ENCODE measurements at regions of chr20 and their contacts with region 1.

Region 1: GRCh38 chr20:31452575-31452974 is 12.1 kb downstream of the DEFB123 start:
- DNase-seq: no peak
- H3K4me3 Mint-ChIP-seq: no peak overlapping the region
- H3K27ac Mint-ChIP-seq: no peak overlapping the region
- H3K4me1 Mint-ChIP-seq: no peaks in the 10 kb centered on the region
- H3K27me3 Mint-ChIP-seq: peaks cover 10% of the 10 kb centered on the region
- CTCF ChIP-seq: no peak

Region 2: GRCh38 chr20:31368301-31368700 is 84.3 kb before region 1 on chr20 and contains the start of gene DEFB118:
- CTCF ChIA-PET with region 1: no interaction called
- POLR2A ChIA-PET with region 1: no interaction called
- intact Hi-C with region 1: no loop called
- DNase-seq: no peak
- H3K4me3 Mint-ChIP-seq: no peak within 1 kb of the TSS
- H3K27ac Mint-ChIP-seq: no peak within 1 kb of the TSS
- H3K4me1 Mint-ChIP-seq: no peaks in the 10 kb centered on the region
- H3K27me3 Mint-ChIP-seq: peaks cover 33% of the 10 kb centered on the region
- CTCF ChIP-seq: no peak
- total RNA-seq, gene DEFB118: not detected in 2 replicates

Region 3: DNA sequence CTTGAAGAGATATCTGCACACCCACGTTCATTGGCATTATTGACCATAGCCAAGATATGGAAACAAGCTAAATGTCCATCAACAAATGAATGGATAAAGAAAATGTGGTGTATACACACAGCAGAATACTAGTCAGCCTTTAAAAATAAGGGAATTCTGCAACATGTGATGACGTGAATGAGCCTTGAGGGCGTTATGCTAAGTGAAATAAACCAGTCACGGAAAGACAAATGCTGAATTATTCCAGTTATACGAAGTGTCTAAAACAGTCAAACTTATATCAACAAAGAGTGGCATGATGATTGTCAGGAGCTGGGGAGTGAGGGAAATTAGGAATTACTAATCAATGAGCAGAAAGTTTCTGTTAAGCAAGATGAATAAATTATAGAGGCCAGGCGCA is 38.2 kb before region 1 on chr20:
- CTCF ChIA-PET with region 1: interaction called, 15 read pairs
- POLR2A ChIA-PET with region 1: no interaction called
- intact Hi-C with region 1: no loop called
- DNase-seq: no peak
- H3K4me3 Mint-ChIP-seq: no peak overlapping the region
- H3K27ac Mint-ChIP-seq: no peak overlapping the region
- H3K4me1 Mint-ChIP-seq: no peaks in the 10 kb centered on the region
- H3K27me3 Mint-ChIP-seq: peaks cover 40% of the 10 kb centered on the region
- CTCF ChIP-seq: no peak

Region 4: GRCh38 chr20:31440012-31441002 is 12.3 kb before region 1 on chr20 and contains the start of gene DEFB123:
- CTCF ChIA-PET with region 1: interaction called, 43 read pairs
- POLR2A ChIA-PET with region 1: no interaction called
- intact Hi-C with region 1: no loop called
- DNase-seq: no peak
- H3K4me3 Mint-ChIP-seq: no peak within 1 kb of the TSS
- H3K27ac Mint-ChIP-seq: no peak within 1 kb of the TSS
- H3K4me1 Mint-ChIP-seq: no peaks in the 10 kb centered on the region
- H3K27me3 Mint-ChIP-seq: peaks cover 35% of the 10 kb centered on the region
- CTCF ChIP-seq: peak; percentile 22
- total RNA-seq, gene DEFB123: not detected in 2 replicates

Region 5: GRCh38 chr20:31508517-31509244 is 56.1 kb after region 1 on chr20:
- CTCF ChIA-PET with region 1: interaction called, 21 read pairs
- POLR2A ChIA-PET with region 1: no interaction called
- intact Hi-C with region 1: no loop called
- DNase-seq: no peak
- H3K4me3 Mint-ChIP-seq: no peak overlapping the region
- H3K27ac Mint-ChIP-seq: no peak overlapping the region
- H3K4me1 Mint-ChIP-seq: no peaks in the 10 kb centered on the region
- H3K27me3 Mint-ChIP-seq: peaks cover 11% of the 10 kb centered on the region
- CTCF ChIP-seq: no peak

Region 6: GRCh38 chr20:32152421-32153155 is 700.0 kb after region 1 on chr20:
- CTCF ChIA-PET with region 1: no interaction called
- POLR2A ChIA-PET with region 1: no interaction called
- intact Hi-C with region 1: no loop called
- DNase-seq: no peak
- H3K4me3 Mint-ChIP-seq: no peak overlapping the region
- H3K27ac Mint-ChIP-seq: no peak overlapping the region
- H3K4me1 Mint-ChIP-seq: peaks cover 17% of the 10 kb centered on the region
- H3K27me3 Mint-ChIP-seq: no peaks in the 10 kb centered on the region
- CTCF ChIP-seq: no peak

Measured in MCF 10A (cell line).